HEK293 (cell line): ENCODE measurements at regions of chr1 and their contacts with region 1.

Region 1: DNA sequence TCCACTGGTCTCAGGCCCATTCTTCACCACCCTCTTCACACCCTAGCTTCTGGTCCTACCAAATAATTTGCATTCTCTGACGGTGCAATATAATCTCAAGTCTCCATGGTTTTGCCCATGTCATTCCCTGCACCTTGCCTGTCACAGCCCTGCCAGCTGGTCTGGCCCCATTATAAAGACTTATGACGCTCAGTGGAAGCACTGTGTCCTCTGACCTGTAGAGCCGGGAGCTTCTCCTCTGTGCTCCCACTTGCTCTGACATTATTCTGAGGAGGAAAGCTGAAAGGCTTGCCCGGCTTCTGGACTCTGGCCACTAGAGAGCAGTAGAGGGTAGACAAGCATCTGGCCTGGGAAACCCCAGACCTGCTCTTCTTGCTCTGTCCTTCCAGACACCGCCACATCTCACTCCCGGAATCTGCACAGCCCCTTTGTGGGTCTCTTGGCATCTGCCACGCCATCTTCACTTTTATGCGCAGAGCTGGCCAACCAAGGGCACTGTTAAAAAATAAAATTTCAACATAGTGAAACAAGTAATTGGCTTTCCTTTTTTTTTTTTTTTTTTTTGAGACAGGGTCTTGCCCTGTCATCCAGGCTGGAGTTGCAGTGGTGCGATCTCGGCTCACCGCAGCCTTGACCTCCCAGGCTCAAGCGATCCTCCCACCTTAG is 44.4 kb downstream of the NENF start:
- H3K4me3 ChIP-seq: no peak overlapping the region
- H3K27ac ChIP-seq: no peak overlapping the region
- H3K4me1 ChIP-seq: no peaks in the 10 kb centered on the region
- CTCF ChIP-seq: peak; percentile 73

Region 2: GRCh38 chr1:212313616-212314015 is 163.5 kb before region 1 on chr1:
- CTCF ChIA-PET with region 1: no interaction called
- POLR2A ChIA-PET with region 1: no interaction called
- H3K4me3 ChIP-seq: no peak overlapping the region
- H3K27ac ChIP-seq: no peak overlapping the region
- H3K4me1 ChIP-seq: no peaks in the 10 kb centered on the region
- CTCF ChIP-seq: no peak

Region 3: GRCh38 chr1:212353181-212353580 is 124.0 kb before region 1 on chr1:
- CTCF ChIA-PET with region 1: no interaction called
- POLR2A ChIA-PET with region 1: no interaction called
- H3K4me3 ChIP-seq: no peak overlapping the region
- H3K27ac ChIP-seq: no peak overlapping the region
- H3K4me1 ChIP-seq: no peaks in the 10 kb centered on the region
- CTCF ChIP-seq: no peak

Region 4: DNA sequence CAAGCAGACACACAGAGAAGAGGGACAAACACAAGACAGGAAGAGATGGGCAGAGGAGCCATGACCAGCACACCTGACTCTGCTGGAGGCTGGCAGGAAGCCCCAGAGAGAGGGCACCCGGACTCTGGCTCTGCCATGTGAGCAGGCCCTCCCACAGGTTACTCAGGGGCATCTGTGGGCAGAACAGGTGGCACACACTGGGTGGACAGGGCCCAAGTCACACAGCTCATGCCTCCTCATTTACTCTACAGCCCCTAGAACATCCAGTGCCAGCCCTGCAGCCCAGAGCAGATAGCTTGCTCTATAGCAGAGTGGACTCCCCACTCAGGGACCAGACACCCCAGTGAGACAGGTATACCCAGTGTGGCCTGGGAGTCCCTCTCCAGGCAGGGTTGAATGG is 91.1 kb before region 1 on chr1:
- CTCF ChIA-PET with region 1: no interaction called
- POLR2A ChIA-PET with region 1: no interaction called
- H3K4me3 ChIP-seq: no peak overlapping the region
- H3K27ac ChIP-seq: no peak overlapping the region
- H3K4me1 ChIP-seq: no peaks in the 10 kb centered on the region
- CTCF ChIP-seq: no peak

Region 5: GRCh38 chr1:212488397-212489283 is 11.5 kb after region 1 on chr1:
- CTCF ChIA-PET with region 1: interaction called, 29 read pairs
- POLR2A ChIA-PET with region 1: interaction called, 4 read pairs
- H3K4me3 ChIP-seq: no peak overlapping the region
- H3K27ac ChIP-seq: no peak overlapping the region
- H3K4me1 ChIP-seq: no peaks in the 10 kb centered on the region; the same call in 1 of the 2 replicates
- CTCF ChIP-seq: no peak

Region 6: DNA sequence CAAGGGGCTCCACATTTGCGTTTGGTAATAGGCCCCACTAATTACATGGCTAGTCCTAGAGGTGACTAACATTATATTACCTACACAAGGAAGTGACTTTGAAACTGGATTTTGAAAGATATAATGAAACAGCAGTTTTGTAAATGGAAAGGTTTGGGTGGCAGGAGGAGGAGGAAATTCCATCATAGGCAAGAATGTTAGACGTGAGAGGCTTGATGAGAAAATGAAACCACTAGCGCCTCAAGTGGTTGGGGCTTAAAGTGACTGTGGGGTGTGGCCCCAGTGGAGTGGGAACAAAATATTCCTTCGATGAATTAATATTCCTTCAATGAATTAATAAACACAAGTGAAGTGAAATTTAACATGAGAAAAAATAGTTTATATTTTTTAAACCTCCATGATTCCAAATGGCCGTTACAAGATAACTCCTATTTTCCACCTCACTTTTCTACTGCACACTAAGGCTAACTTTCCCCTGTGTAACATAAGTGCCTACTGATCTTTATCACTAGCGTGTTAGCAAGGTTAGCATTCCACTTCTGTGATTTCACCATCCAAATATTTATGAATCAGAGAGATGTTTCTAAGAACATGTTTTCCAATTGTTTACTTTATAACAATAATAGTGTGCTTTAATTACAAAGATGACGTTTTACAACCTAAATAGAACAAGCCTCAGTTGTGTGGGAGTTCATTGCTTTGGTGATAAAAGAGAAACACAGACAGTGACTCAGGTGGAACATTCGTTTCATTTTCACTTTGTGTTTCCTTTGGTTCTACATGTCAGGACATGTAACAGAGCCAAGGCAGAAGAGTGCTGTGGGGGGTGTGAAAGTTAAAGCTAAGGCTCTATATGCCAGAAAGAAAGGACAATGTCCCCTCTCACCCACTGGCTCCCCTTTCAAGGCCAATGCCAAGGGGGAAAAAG is 118.9 kb after region 1 on chr1:
- CTCF ChIA-PET with region 1: interaction called, 23 read pairs
- POLR2A ChIA-PET with region 1: interaction called, 3 read pairs
- H3K4me3 ChIP-seq: peak overlapping the region; percentile 3; the same call in 1 of the 2 replicates
- H3K27ac ChIP-seq: peak overlapping the region; percentile 42; the same call in 1 of the 2 replicates
- H3K4me1 ChIP-seq: no peaks in the 10 kb centered on the region; the same call in 1 of the 2 replicates
- CTCF ChIP-seq: no peak

Region 7: GRCh38 chr1:212700892-212701819 is 224.0 kb after region 1 on chr1:
- CTCF ChIA-PET with region 1: interaction called, 11 read pairs
- POLR2A ChIA-PET with region 1: no interaction called
- H3K4me3 ChIP-seq: peak overlapping the region; percentile 47
- H3K27ac ChIP-seq: peak overlapping the region; percentile 63; the same call in 1 of the 2 replicates
- H3K4me1 ChIP-seq: peaks cover 8% of the 10 kb centered on the region
- CTCF ChIP-seq: peak; percentile 63; the same call in 1 of the 2 replicates